ENCODE measurements at regions of chr2 and their contacts with region 1.

Region 1: GRCh38 chr2:1051064-1051983 is 100.7 kb downstream of the SNTG2 start:
- DNase-seq: no peak
- ATAC-seq: no peak
- H3K4me3 ChIP-seq: no peak overlapping the region
- H3K27ac ChIP-seq: no peak overlapping the region
- H3K4me1 ChIP-seq: no peaks in the 10 kb centered on the region
- H3K27me3 ChIP-seq: no peaks in the 10 kb centered on the region
- CTCF ChIP-seq: no peak
- EP300 ChIP-seq: no peak
- POLR2A ChIP-seq: no peak
- RAD21 ChIP-seq: no peak

Region 2: GRCh38 chr2:985317-985898 is 65.9 kb before region 1 on chr2:
- CTCF ChIA-PET with region 1: no interaction called
- POLR2A ChIA-PET with region 1: no interaction called
- in situ Hi-C with region 1: loop called (anchors 5 kb)
- intact Hi-C with region 1: no loop called
- DNase-seq: no peak
- ATAC-seq: no peak
- H3K4me3 ChIP-seq: no peak overlapping the region
- H3K27ac ChIP-seq: no peak overlapping the region
- H3K4me1 ChIP-seq: peaks cover 0 to 2% of the 10 kb centered on the region in 2 experiments; a peak in 1 of 5 replicates
- H3K27me3 ChIP-seq: peaks cover 0 to 18% of the 10 kb centered on the region in 2 experiments; a peak in 3 of 5 replicates
- CTCF ChIP-seq: no peak
- EP300 ChIP-seq: no peak
- POLR2A ChIP-seq: no peak
- RAD21 ChIP-seq: no peak